ENCODE measurements at regions of chr6 and their contacts with region 1.

Region 1: GRCh38 chr6:35452186-35453090 is at the start of gene FANCE:
- DNase-seq: peak; percentile 72
- ATAC-seq: peak; percentile 95
- H3K4me3 ChIP-seq: peak within 1 kb of the TSS; percentile 81
- H3K27ac ChIP-seq: peak within 1 kb of the TSS; percentile 38; the same call in 1 of the 2 replicates
- H3K4me1 ChIP-seq: peaks cover 10% of the 10 kb centered on the region
- H3K27me3 ChIP-seq: 0 out of 4 replicates have a peak, but pooled peaks cover 0 to 3% of the 10 kb centered on the region in 2 experiments
- CTCF ChIP-seq: no peak
- EP300 ChIP-seq: no peak
- POLR2A ChIP-seq: peak; percentile 69
- RAD21 ChIP-seq: no peak
- polyA plus RNA-seq, gene FANCE: 3.0 to 3.7 TPM

Region 2: DNA sequence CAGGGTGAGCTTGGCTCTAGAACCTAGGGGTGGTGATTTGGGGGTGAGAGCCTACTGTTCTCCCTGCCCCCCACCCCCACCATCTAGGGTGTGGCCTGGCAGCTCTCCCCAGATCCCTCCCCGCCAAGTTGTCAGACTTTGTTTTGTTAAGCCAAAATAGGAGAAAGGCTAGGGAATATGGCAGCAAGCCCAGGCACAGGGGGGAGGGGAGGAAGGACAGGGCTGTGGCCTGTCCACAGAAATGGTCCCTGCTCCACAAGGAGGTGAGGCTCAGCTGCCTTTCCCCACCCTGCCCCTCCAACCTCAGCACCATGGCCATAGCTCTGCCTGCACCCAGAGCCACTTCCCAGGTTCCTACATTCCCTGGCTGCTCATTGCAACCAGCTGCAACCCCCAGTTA is 221.5 kb before region 1 on chr6:
- CTCF ChIA-PET with region 1: no interaction called
- POLR2A ChIA-PET with region 1: no interaction called
- RAD21 ChIA-PET with region 1: no interaction called
- SMC1A ChIA-PET with region 1: no interaction called
- in situ Hi-C with region 1: no loop called
- intact Hi-C with region 1: no loop called
- DNase-seq: no peak
- ATAC-seq: no peak
- H3K4me3 ChIP-seq: no peak overlapping the region
- H3K27ac ChIP-seq: no peak overlapping the region
- H3K4me1 ChIP-seq: no peaks in the 10 kb centered on the region
- H3K27me3 ChIP-seq: no peaks in the 10 kb centered on the region
- CTCF ChIP-seq: no peak
- EP300 ChIP-seq: no peak
- POLR2A ChIP-seq: no peak
- RAD21 ChIP-seq: no peak

Region 3: GRCh38 chr6:35327349-35328027 is 125.0 kb before region 1 on chr6:
- CTCF ChIA-PET with region 1: interaction called, 67 read pairs
- POLR2A ChIA-PET with region 1: no interaction called
- RAD21 ChIA-PET with region 1: interaction called, 3 read pairs
- SMC1A ChIA-PET with region 1: interaction called, 7 read pairs
- in situ Hi-C with region 1: no loop called
- intact Hi-C with region 1: no loop called
- DNase-seq: no peak
- ATAC-seq: peak; percentile 99
- H3K4me3 ChIP-seq: no peak overlapping the region
- H3K27ac ChIP-seq: no peak overlapping the region
- H3K4me1 ChIP-seq: no peaks in the 10 kb centered on the region
- H3K27me3 ChIP-seq: no peaks in the 10 kb centered on the region
- CTCF ChIP-seq: peak; percentile 73 to 90 (median 86)
- EP300 ChIP-seq: no peak
- POLR2A ChIP-seq: no peak
- RAD21 ChIP-seq: peak; percentile 73

Region 4: GRCh38 chr6:35342258-35343091 is 110.0 kb before region 1 on chr6 and contains the start of gene PPARD:
- CTCF ChIA-PET with region 1: interaction called, 177 read pairs
- POLR2A ChIA-PET with region 1: interaction called, 4 read pairs
- RAD21 ChIA-PET with region 1: interaction called, 125 read pairs
- SMC1A ChIA-PET with region 1: interaction called, 116 read pairs
- in situ Hi-C with region 1: loop called (anchors 5 kb)
- intact Hi-C with region 1: loop called (anchors 1 kb)
- DNase-seq: peak; percentile 71
- ATAC-seq: peak; percentile 97
- H3K4me3 ChIP-seq: peak within 1 kb of the TSS; percentile 84
- H3K27ac ChIP-seq: peak within 1 kb of the TSS; percentile 70
- H3K4me1 ChIP-seq: no peaks in the 10 kb centered on the region; the same call in 1 of the 2 replicates
- H3K27me3 ChIP-seq: no peaks in the 10 kb centered on the region
- CTCF ChIP-seq: peak; percentile 97 to 99 (median 97); a peak in 5 of 6 replicates
- EP300 ChIP-seq: no peak
- POLR2A ChIP-seq: 0 out of 2 replicates have a peak, but pooled peaks have one; percentile 41
- RAD21 ChIP-seq: peak; percentile 100
- polyA plus RNA-seq, gene PPARD: 0.05 to 0.38 TPM

Region 5: DNA sequence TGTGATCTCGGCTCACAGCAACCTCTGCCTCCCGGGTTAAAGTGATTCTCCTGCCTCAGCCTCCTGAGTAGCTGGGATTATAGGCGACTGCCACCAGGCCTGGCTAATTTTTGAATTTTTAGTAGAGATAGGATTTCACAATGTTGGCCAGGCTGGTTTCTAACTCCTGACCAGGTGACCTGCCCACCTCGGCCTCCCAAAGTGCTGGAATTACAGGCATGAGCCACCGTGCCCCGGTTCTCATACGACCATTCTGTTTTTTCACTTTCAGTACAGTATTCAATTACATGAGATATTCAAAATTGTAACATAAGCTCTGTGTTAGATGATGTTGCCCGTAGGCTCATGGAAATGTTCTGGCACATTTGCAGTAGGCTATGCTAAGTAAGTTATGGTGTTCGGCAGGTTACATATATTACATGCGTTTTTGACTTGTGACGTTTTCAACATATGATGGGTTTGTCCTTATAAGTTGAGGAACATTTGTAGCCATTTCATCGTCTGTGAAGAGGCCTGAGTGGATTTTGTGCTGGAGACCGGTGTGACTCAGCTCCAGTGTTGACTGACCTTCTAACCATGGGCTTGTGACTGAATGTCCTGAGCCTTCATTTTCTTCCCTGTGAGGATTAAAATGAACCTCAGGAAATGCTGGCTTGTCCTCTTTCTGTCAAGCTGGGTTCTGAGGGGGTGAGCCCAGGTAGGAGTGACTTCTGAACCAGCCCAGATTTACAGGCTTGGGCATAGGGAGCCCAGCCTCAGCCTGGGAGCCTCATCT is 97.9 kb before region 1 on chr6:
- CTCF ChIA-PET with region 1: interaction called, 17 read pairs
- POLR2A ChIA-PET with region 1: no interaction called
- RAD21 ChIA-PET with region 1: interaction called, 17 read pairs
- SMC1A ChIA-PET with region 1: interaction called, 24 read pairs
- in situ Hi-C with region 1: no loop called
- intact Hi-C with region 1: no loop called
- DNase-seq: no peak
- ATAC-seq: no peak
- H3K4me3 ChIP-seq: no peak overlapping the region
- H3K27ac ChIP-seq: no peak overlapping the region
- H3K4me1 ChIP-seq: no peaks in the 10 kb centered on the region; the same call in 1 of the 2 replicates
- H3K27me3 ChIP-seq: no peaks in the 10 kb centered on the region
- CTCF ChIP-seq: no peak
- EP300 ChIP-seq: no peak
- POLR2A ChIP-seq: no peak
- RAD21 ChIP-seq: no peak

Region 6: DNA sequence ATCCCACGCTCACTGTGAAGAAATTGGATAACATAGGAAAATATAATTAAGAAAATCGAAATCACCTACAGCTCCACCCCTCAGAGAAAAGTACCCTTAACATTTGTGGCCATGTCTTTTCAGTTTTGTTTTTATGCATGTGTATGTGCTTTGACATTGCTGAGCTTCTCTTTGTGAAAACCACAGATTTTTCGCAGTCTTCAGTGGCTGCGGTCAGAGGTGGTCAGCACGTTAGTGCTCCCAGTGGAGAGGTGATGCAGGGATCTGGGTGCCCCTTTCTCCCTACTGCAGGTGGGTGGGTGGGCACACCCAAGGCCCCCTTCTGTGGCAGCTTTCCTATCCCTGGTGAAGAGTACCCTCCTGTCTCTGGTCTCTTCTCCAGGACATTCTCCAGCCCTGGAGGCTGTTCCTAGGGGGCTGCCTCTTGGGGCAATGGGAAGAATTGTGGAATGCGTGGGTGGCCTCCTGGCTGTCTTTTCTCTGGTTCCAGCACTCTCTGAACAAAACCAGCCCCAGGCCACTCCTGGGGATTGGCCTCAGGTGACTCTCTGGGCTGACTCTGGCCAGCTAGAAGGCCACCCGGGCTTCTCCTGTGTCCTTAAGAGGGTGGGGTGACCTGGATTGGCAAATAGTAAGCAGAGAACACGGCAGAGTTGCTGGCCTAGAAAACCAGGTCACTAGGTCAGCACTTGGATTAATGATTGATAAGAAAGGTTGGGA is 50.1 kb before region 1 on chr6:
- CTCF ChIA-PET with region 1: interaction called, 11 read pairs
- POLR2A ChIA-PET with region 1: no interaction called
- RAD21 ChIA-PET with region 1: interaction called, 7 read pairs
- SMC1A ChIA-PET with region 1: interaction called, 3 read pairs
- in situ Hi-C with region 1: no loop called
- intact Hi-C with region 1: no loop called
- DNase-seq: peak; percentile 51
- ATAC-seq: peak; percentile 95
- H3K4me3 ChIP-seq: peak overlapping the region; percentile 48; the same call in 1 of the 2 replicates
- H3K27ac ChIP-seq: peak overlapping the region; percentile 5
- H3K4me1 ChIP-seq: peaks cover 23% of the 10 kb centered on the region
- H3K27me3 ChIP-seq: no peaks in the 10 kb centered on the region
- CTCF ChIP-seq: peak; percentile 15 to 31 (median 30); a peak in 4 of 6 replicates
- EP300 ChIP-seq: peak; percentile 30 to 33; a peak in 1 of 4 replicates
- POLR2A ChIP-seq: no peak
- RAD21 ChIP-seq: peak; percentile 29; the same call in 1 of the 2 replicates

Region 7: DNA sequence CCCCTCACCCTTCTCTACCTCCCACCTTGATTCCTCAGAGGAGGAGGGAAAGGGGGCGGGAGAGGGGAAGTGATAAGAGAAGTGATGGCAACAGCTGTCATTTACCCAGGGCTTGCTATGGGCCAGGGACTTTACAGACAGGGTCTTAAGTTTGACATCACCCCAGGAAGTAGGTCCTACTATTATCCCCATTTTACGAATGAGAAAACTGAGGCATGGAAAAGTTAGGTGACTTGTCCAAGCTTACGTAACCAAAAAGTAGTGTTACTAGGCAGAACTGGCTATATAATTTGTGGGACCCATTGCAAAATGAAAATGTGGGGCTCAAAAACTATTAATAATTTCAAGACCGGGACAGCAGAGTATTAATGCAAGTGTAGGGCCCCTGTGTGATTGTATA is 10.8 kb before region 1 on chr6:
- CTCF ChIA-PET with region 1: no interaction called
- POLR2A ChIA-PET with region 1: no interaction called
- RAD21 ChIA-PET with region 1: no interaction called
- SMC1A ChIA-PET with region 1: no interaction called
- in situ Hi-C with region 1: no loop called
- intact Hi-C with region 1: no loop called
- DNase-seq: no peak
- ATAC-seq: no peak
- H3K4me3 ChIP-seq: no peak overlapping the region
- H3K27ac ChIP-seq: no peak overlapping the region
- H3K4me1 ChIP-seq: no peaks in the 10 kb centered on the region
- H3K27me3 ChIP-seq: no peaks in the 10 kb centered on the region
- CTCF ChIP-seq: no peak
- EP300 ChIP-seq: no peak
- POLR2A ChIP-seq: no peak
- RAD21 ChIP-seq: no peak

Region 8: DNA sequence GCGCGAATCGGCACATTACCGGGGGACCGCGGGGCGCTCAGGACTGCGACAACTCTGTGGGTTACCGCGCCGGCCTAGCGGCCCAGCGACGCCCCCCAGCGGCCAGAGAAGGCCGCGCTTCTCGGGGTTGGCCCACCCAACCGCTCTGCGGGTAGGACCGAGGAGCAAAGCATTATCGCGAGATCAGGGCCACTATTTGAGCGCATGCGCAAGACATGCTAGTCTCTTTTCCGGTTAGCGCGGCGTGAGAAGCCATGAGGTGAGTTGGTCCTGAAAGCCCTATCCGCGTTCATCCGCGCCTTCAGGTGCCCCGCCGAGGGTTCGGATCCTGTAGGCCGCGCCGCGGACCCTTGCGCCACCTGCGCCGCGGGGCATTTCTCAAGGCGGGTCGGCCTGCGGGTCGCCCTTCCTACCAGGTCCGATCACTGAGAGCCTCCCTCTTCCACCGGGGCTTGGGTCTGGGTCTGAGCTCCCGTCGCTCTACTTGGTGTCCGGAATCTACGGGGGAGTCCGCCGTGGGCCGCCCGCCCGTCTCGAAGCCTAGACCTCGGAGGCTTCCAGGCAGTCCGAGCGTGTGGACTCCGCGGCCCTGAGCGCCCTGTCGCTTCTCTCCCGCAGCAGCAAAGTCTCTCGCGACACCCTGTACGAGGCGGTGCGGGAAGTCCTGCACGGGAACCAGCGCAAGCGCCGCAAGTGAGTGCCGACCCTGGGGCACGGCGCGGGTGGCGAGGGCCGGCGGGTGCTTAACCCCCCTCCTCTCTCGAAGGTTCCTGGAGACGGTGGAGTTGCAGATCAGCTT is 15.9 kb after region 1 on chr6 and contains the start of gene RPL10A:
- CTCF ChIA-PET with region 1: interaction called, 20 read pairs
- POLR2A ChIA-PET with region 1: interaction called, 9 read pairs
- RAD21 ChIA-PET with region 1: interaction called, 8 read pairs
- SMC1A ChIA-PET with region 1: interaction called, 15 read pairs
- in situ Hi-C with region 1: no loop called
- intact Hi-C with region 1: loop called (anchors 2 kb)
- DNase-seq: peak; percentile 94
- ATAC-seq: peak; percentile 89
- H3K4me3 ChIP-seq: peak within 1 kb of the TSS; percentile 99
- H3K27ac ChIP-seq: peak within 1 kb of the TSS; percentile 87
- H3K4me1 ChIP-seq: no peaks in the 10 kb centered on the region
- H3K27me3 ChIP-seq: no peaks in the 10 kb centered on the region
- CTCF ChIP-seq: peak; percentile 98 to 100 (median 99); a peak in 5 of 6 replicates
- EP300 ChIP-seq: no peak
- POLR2A ChIP-seq: peak; percentile 100
- RAD21 ChIP-seq: peak; percentile 79
- polyA plus RNA-seq, gene RPL10A: 2,399 to 2,699 TPM